Activated naive CD4-positive, alpha-beta T cell treated with anti-CD3 and anti-CD28 coated beads for 36 hours (primary cell): ENCODE measurements at regions of chr11 and their contacts with region 1.

Region 1: GRCh38 chr11:14300661-14301304 is 58.2 kb downstream of the RRAS2 start:
- DNase-seq: peak; percentile 69
- H3K4me3 Mint-ChIP-seq: no peak overlapping the region
- H3K27ac Mint-ChIP-seq: no peak overlapping the region
- H3K4me1 Mint-ChIP-seq: peaks cover 2% of the 10 kb centered on the region
- H3K27me3 Mint-ChIP-seq: no peaks in the 10 kb centered on the region

Region 2: DNA sequence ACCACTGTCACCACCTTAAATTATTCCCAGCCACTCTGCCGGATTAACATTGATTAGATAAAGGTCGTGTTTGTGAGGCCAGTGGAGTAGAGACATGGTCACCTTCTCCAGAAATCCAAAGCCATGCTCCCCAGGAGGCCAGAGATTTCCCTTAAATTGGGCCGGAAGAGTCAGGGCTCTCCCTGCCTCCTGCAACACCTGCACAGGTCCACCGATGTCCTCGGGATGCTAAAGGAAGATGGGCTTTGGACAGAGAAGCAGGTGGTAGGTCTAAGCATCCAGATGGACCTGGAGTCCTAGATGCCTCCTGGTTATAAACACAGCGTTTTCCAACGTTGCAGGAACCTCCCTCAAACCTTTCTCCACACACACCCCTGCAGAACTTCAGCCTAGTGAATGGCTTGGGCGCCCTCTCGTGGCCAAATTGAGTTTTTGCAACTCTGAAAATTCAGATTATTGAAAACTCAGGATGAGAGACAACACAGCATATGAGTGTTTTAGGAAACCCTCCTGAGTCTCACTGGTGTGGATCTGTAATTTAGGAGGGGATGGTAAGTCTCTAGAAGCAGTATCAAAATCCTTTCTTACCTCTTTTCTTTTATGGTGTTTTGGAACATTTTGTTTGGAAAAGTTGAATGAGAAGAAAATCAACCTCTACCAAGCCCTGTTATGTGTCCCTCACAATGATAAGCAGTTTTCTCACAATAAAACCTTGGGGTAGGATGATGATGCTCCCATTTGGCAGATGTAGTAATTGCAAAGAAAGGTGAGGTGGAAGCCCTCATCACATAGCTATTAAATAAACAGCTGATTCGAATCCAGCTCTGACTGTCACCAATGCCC is 51.4 kb before region 1 on chr11:
- CTCF ChIA-PET with region 1: no interaction called
- intact Hi-C with region 1: no loop called
- DNase-seq: peak; percentile 82
- H3K4me3 Mint-ChIP-seq: no peak overlapping the region
- H3K27ac Mint-ChIP-seq: no peak overlapping the region
- H3K4me1 Mint-ChIP-seq: peaks cover 15% of the 10 kb centered on the region
- H3K27me3 Mint-ChIP-seq: no peaks in the 10 kb centered on the region

Region 3: GRCh38 chr11:14418803-14419417 is 118.1 kb after region 1 on chr11:
- CTCF ChIA-PET with region 1: interaction called, 15 read pairs
- intact Hi-C with region 1: loop called (anchors 1 kb)
- DNase-seq: peak; percentile 17
- H3K4me3 Mint-ChIP-seq: no peak overlapping the region
- H3K27ac Mint-ChIP-seq: no peak overlapping the region
- H3K4me1 Mint-ChIP-seq: peaks cover 28% of the 10 kb centered on the region
- H3K27me3 Mint-ChIP-seq: no peaks in the 10 kb centered on the region